Left cardiac atrium (tissue), 4 donors: ENCODE measurements at regions of chr9 and their contacts with region 1.

Region 1: GRCh38 chr9:114291064-114291474 is 31.8 kb upstream of the ORM1 start:
- DNase-seq: peak; percentile 66
- ATAC-seq: peak; percentile 29 to 55

Region 2: GRCh38 chr9:114082017-114082762 is 208.9 kb before region 1 on chr9:
- intact Hi-C with region 1: loop called in 1 of 2 experiments (anchors 5 kb)
- DNase-seq: peak; percentile 88
- ATAC-seq: peak; percentile 93

Region 3: GRCh38 chr9:114098016-114098935 is 192.8 kb before region 1 on chr9:
- intact Hi-C with region 1: loop called in 1 of 2 experiments (anchors 5 kb)
- DNase-seq: peak; percentile 37
- ATAC-seq: peak; percentile 83 to 84